ENCODE measurements at regions of chr5 and their contacts with region 1.

Region 1: DNA sequence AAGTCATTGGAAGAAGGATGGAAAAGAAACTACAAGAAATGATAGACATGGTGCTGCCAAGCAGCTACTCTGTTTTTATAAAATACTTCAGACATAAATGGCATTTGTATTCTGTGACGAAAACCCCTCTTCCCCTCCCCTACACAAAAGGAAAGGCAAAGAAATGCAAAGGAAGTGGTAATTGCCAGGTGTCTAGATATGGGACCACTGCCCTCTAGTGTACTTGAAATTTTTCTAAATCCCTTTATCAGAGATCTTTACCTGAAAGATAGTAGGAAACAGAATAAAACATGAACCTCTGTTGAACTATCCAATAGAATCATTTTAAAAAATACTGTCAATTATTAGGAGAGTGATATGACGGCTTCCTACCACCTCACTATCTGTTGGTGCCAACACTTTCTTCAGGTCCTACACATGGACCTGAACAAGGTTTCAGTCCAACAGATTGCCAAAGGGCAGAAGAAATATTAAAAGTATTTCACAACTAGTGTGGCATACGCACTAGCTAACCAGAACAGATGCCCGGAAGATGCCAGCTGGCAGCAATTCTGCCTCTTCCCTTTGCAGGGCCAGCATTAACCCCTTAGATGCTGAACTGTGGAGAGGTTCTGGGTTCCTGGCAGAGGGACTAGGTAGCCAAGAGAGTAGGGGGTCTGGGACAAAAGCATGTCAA is 104.1 kb downstream of the TSSK1B start:
- DNase-seq: peak; percentile 83

Region 2: GRCh38 chr5:112995764-112996618 is 334.7 kb before region 1 on chr5:
- intact Hi-C with region 1: loop called (anchors 10 kb)
- DNase-seq: peak; percentile 86

Measured in posterior vena cava (tissue), 2 donors.